ENCODE measurements at regions of chr13 and their contacts with region 1.

Region 1: DNA sequence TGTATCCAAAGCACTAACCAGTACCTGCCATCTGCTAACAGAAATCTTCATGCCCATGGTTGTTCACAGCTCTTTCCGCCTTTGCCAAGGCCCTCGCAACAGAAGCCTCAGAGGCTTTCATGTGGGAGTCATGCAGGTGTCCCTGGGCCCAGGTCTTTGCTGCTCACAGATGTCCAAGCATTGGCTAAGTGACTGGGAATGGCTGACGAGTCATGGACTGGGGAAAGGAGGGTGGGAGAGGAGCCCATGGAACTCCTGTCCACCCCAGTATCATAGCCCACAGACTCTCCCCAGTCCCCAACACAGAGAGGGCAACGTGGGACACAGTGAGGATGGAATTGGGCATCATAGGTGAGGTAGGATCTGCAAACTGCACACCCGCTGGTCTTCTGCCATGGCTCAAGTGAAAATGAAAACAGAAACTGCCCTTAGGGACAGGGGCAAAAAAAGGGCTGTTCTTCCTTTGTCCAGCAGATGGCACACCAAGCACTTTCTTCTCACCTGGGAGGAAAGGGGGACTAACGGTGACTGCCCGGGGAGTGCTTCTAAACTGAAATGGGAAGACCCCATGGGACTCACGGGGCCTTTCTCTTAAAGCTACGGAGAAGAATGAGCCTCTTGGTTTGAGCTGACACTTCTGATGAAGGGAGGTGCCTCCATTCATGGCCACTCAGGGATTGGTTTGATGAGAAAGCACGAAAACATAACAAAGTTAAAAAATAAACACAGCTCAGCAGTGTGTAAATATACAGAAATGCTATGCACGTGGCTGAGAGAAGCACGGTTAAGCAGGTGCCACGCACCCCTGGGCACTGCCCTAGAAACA is 11.1 kb upstream of the DHRS12 start:
- DNase-seq: peak; percentile 94
- H3K4me3 Mint-ChIP-seq: peak overlapping the region; percentile 33
- H3K27ac Mint-ChIP-seq: peak overlapping the region; percentile 5
- H3K4me1 Mint-ChIP-seq: peaks cover 45% of the 10 kb centered on the region
- H3K27me3 Mint-ChIP-seq: peaks cover 5% of the 10 kb centered on the region

Region 2: GRCh38 chr13:51803422-51804294 is 11.4 kb before region 1 on chr13 and contains the start of gene DHRS12:
- intact Hi-C with region 1: loop called (anchors 1 kb)
- DNase-seq: peak; percentile 95
- H3K4me3 Mint-ChIP-seq: peak within 1 kb of the TSS; percentile 97
- H3K27ac Mint-ChIP-seq: peak within 1 kb of the TSS; percentile 98
- H3K4me1 Mint-ChIP-seq: peaks cover 39% of the 10 kb centered on the region
- H3K27me3 Mint-ChIP-seq: no peaks in the 10 kb centered on the region
- total RNA-seq, gene DHRS12: 3.2 and 3.9 TPM in 2 replicates

Region 3: GRCh38 chr13:51838240-51838846 is 23.3 kb after region 1 on chr13:
- intact Hi-C with region 1: loop called (anchors 1 kb)
- DNase-seq: no peak
- H3K4me3 Mint-ChIP-seq: no peak overlapping the region
- H3K27ac Mint-ChIP-seq: peak overlapping the region; percentile 30
- H3K4me1 Mint-ChIP-seq: peaks cover 19% of the 10 kb centered on the region
- H3K27me3 Mint-ChIP-seq: peaks cover 9% of the 10 kb centered on the region

Region 4: GRCh38 chr13:51911860-51912510 is 96.9 kb after region 1 on chr13:
- intact Hi-C with region 1: loop called (anchors 1 kb)
- DNase-seq: no peak
- H3K4me3 Mint-ChIP-seq: no peak overlapping the region
- H3K27ac Mint-ChIP-seq: no peak overlapping the region
- H3K4me1 Mint-ChIP-seq: peaks cover 28% of the 10 kb centered on the region
- H3K27me3 Mint-ChIP-seq: peaks cover 3% of the 10 kb centered on the region

Region 5: DNA sequence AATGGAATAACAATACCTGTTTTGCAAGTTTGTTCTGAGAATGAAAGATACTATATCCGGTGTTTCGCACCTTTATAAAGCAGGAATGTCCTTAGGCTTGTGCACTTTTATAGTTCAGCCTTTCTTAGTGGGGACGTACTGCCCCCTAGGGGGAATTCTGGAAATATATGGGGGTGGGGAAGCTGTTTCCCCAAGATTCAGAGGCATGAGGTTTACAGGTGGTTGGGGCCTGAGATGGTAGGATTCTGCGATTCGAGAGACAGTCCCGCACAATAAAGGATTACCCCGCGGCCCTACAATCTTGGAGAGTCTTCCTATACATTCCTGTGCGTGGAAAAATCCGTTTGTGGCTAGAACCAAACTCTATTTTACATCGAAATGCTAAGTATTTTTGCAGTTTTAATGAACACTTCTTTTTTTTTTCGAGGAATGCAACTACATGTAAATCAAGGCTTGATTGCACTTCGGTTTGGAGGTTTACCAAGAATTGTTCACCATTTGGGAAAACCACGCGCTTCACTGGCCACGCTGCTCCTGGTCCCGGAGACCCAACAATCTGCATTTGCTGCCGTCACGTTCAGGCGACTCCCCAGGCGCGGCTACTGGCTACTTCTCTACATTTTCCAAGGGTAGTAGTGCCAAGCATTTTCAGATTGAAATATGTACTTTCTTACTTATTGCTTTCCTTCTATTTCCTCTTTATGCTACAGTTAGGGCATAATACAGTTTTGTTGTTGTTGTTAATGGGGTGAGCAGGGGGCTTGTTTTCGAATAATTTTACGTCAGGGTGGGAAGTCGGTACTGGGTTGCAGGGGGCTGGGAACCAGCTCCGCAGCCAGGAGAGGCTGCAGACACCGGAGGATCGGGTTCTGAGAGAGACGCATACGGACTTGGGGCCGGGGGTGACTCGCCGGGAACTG is 313.0 kb after region 1 on chr13:
- intact Hi-C with region 1: loop called (anchors 2 kb)
- DNase-seq: peak; percentile 89
- H3K4me3 Mint-ChIP-seq: peak overlapping the region; percentile 89
- H3K27ac Mint-ChIP-seq: no peak overlapping the region
- H3K4me1 Mint-ChIP-seq: peaks cover 22% of the 10 kb centered on the region
- H3K27me3 Mint-ChIP-seq: peaks cover 16% of the 10 kb centered on the region